Caco-2 (cell line): ENCODE measurements at regions of chr4 and their contacts with region 1.

Region 1: DNA sequence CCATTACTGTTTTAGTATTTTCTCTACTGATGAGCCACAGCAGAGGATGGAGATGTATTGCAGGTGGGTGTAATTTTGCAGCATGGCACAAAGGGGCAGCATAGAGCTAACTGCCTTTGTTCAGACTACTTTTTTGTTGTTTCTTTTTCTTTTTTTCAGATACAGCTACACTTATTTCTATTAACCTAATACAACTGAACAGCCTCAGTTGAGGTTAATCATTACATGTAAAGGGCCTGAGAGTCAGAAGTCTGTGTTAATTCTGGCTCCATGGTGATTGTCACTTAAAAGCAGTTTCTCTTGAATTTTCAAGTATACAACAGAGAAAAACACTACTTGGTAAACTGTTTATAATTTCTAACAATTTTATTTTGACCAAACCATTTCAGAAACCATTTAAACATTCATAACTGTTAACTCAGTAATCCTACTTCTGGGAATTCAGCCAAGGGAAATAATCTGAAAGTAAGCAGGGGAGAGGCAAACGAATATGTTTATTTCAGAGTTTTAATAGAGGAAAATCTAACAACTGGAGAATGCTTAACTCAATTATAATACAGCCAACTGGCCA is 13.9 kb upstream of the PPEF2 start:
- DNase-seq: peak in 1 of 2 experiments; percentile 48
- H3K4me3 ChIP-seq: no peak overlapping the region
- H3K4me3 Mint-ChIP-seq: no peak overlapping the region
- H3K27ac Mint-ChIP-seq: no peak overlapping the region
- H3K4me1 ChIP-seq: peaks cover 16% of the 10 kb centered on the region
- H3K4me1 Mint-ChIP-seq: no peaks in the 10 kb centered on the region
- H3K27me3 ChIP-seq: no peaks in the 10 kb centered on the region
- H3K27me3 Mint-ChIP-seq: no peaks in the 10 kb centered on the region
- CTCF ChIP-seq: peak; percentile 71 to 79

Region 2: DNA sequence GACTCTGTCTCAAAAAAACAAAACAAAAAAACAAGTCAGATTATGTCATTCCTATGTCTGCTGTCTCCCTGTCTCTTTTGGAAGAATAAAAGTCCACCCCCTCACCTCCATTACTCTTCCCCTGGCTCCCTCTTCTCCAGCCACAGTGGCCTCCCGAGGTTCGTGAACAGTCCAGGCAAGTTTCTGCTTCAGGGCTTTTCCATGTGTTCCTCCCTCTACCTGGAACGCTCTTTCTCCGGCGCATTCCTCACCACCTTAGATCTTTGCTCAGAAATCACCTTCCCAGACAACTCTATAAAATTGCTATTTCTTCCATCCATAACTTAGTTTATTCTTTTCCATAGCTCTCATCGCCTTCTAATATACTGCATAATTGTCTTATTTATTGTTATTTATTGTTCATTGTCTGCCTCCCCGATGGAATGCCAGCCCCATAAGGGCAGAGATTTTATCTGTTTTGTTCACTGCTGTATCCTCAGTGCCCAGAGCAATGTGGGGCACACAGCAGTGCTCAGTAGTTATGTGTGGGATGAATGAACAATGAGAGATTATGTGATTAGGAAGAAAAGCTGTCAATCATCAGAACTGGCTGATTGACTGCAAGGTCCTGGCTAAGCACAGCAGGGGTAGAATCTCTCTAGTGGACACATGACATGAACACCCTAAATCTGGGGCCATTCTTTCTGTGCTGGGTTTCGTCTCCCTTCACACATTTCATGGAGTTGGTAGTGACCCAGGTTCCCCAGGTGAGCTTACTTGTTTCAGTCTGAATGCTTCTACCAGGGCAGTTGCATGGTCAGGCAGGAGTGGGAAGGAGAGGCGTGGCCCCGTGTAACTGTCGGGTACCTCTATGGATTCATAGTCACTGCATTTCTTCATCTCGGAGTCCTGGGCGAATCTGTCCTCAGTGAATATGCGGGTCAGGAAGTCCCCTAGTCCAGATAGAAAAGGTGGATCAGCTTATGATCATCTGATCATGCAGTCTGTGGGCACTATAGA is 26.7 kb before region 1 on chr4:
- CTCF ChIA-PET with region 1: no interaction called
- POLR2A ChIA-PET with region 1: no interaction called
- intact Hi-C with region 1: no loop called
- DNase-seq: no peak
- H3K4me3 ChIP-seq: no peak overlapping the region
- H3K4me3 Mint-ChIP-seq: no peak overlapping the region
- H3K27ac Mint-ChIP-seq: no peak overlapping the region
- H3K4me1 ChIP-seq: no peaks in the 10 kb centered on the region
- H3K4me1 Mint-ChIP-seq: no peaks in the 10 kb centered on the region
- H3K27me3 ChIP-seq: no peaks in the 10 kb centered on the region
- H3K27me3 Mint-ChIP-seq: peaks cover 4% of the 10 kb centered on the region
- CTCF ChIP-seq: no peak

Region 3: DNA sequence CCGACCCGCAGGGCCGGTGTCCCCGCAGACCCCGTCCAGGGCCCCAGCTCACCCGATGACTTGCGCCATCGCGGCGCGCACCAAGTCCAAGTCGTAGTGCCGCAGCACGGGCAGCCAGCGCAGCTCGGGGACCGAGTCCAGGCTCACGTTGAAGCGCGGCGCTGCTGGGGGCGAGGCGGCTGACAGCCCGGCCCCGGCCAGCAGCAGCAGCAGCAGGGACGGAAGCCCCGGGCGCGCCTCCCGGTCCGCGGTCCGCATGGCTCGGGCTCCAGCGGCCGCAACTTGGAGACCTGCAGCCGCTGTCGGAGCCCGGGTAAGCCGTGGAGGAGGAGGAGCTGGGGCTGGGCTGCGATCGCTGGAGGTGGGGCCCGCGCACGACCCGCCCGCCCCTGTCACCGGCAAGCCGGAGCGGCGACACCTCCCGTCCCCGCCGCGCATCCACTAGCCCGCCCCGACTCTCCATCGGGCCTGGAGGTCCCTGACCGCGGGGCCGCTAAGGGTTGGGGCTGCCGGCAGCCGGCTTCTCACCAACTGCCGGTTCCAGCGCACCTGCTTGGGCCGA is 24.6 kb after region 1 on chr4 and contains the start of gene NAAA:
- CTCF ChIA-PET with region 1: interaction called, 24 read pairs
- POLR2A ChIA-PET with region 1: no interaction called
- intact Hi-C with region 1: loop called (anchors 1 kb)
- DNase-seq: peak; percentile 72 to 84
- H3K4me3 ChIP-seq: peak within 1 kb of the TSS; percentile 45
- H3K4me3 Mint-ChIP-seq: peak within 1 kb of the TSS; percentile 94
- H3K27ac Mint-ChIP-seq: peak within 1 kb of the TSS; percentile 77
- H3K4me1 ChIP-seq: 0 out of 2 replicates have a peak, but pooled peaks cover 3% of the 10 kb centered on the region
- H3K4me1 Mint-ChIP-seq: no peaks in the 10 kb centered on the region
- H3K27me3 ChIP-seq: no peaks in the 10 kb centered on the region
- H3K27me3 Mint-ChIP-seq: no peaks in the 10 kb centered on the region
- CTCF ChIP-seq: peak in 1 of 2 experiments; percentile 6
- total RNA-seq, gene NAAA: 11.2 and 11.8 TPM in 2 replicates

Region 4: GRCh38 chr4:75989846-75990528 is 73.8 kb after region 1 on chr4:
- CTCF ChIA-PET with region 1: no interaction called
- POLR2A ChIA-PET with region 1: no interaction called
- intact Hi-C with region 1: loop called (anchors 2 kb)
- DNase-seq: no peak
- H3K4me3 ChIP-seq: peak overlapping the region; percentile 76
- H3K4me3 Mint-ChIP-seq: peak overlapping the region; percentile 76
- H3K27ac Mint-ChIP-seq: peak overlapping the region; percentile 81
- H3K4me1 ChIP-seq: no peaks in the 10 kb centered on the region
- H3K4me1 Mint-ChIP-seq: peaks cover 18% of the 10 kb centered on the region
- H3K27me3 ChIP-seq: no peaks in the 10 kb centered on the region
- H3K27me3 Mint-ChIP-seq: no peaks in the 10 kb centered on the region
- CTCF ChIP-seq: no peak

Region 5: DNA sequence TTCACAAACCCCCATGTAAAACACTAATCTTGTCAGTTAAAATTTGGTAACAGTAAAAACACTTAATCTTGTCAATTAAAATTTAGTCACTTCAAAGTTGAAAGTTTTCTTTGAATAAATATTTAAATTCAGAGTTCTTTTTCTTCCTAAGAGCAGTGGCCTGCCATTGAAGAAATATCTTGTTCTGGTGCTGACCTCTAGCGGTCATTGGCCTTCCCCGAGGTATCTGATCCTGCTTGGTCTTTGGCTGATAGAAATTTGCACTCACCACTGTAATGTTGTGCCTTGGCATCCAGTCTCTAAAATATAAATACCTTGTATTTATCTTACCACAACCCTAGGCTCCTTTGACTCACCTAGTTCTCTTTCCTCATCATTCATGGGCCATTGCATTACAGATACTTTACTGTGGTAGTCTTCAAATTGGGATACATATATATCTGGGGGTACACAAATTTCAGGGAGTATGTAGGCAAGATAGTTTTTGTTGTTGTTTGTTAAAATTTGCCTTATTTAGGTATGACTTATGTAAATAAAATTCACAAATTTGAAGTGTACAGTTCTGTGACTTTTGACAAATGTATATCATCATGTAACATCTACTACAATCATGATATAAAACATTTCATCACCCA is 151.6 kb after region 1 on chr4:
- CTCF ChIA-PET with region 1: no interaction called
- POLR2A ChIA-PET with region 1: no interaction called
- intact Hi-C with region 1: loop called (anchors 1 kb)
- DNase-seq: peak; percentile 64 to 76
- H3K4me3 ChIP-seq: no peak overlapping the region
- H3K4me3 Mint-ChIP-seq: no peak overlapping the region
- H3K27ac Mint-ChIP-seq: no peak overlapping the region
- H3K4me1 ChIP-seq: no peaks in the 10 kb centered on the region
- H3K4me1 Mint-ChIP-seq: no peaks in the 10 kb centered on the region
- H3K27me3 ChIP-seq: no peaks in the 10 kb centered on the region
- H3K27me3 Mint-ChIP-seq: no peaks in the 10 kb centered on the region
- CTCF ChIP-seq: peak; percentile 69 to 72

Region 6: DNA sequence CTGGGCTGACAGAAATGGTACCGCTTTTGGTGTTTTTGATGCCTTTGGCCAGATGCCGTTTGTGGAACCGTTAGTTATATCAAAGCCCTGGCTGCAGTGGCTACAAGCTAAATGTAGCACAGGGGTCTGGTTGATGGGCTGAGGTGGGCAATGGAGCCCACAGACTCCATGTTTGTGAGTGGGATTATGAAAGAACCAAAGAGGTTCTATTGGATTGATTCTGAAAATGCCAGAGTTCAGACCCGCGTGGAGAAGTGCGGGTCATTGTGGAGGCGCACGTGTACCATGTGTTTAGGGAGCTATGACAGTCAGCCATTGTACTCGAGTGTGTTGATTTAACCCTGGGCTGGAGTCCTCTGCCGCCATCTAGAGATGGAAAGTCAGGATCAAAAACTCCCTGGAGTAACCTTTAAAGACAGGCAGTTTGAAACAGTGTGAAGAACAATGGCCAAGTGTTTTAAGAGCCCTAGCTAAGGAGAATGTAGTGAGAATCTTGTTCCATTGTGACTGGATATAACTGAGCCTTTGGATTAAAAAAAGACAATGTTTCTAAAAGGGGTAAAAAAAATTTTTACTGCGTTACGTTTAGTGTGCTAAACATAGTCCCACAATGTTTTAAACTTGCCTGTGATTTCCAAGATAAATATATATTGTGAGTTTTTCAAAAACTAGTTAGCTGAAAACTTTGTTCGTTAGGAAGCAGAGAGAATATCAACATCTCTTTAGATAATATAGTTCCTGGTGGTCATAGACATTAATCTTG is 171.0 kb after region 1 on chr4:
- CTCF ChIA-PET with region 1: interaction called, 13 read pairs
- POLR2A ChIA-PET with region 1: no interaction called
- intact Hi-C with region 1: no loop called
- DNase-seq: peak; percentile 67 to 71
- H3K4me3 ChIP-seq: peak overlapping the region; percentile 8; the same call in 1 of the 2 replicates
- H3K4me3 Mint-ChIP-seq: peak overlapping the region; percentile 69
- H3K27ac Mint-ChIP-seq: no peak overlapping the region
- H3K4me1 ChIP-seq: no peaks in the 10 kb centered on the region
- H3K4me1 Mint-ChIP-seq: peaks cover 5% of the 10 kb centered on the region
- H3K27me3 ChIP-seq: no peaks in the 10 kb centered on the region
- H3K27me3 Mint-ChIP-seq: no peaks in the 10 kb centered on the region
- CTCF ChIP-seq: peak; percentile 40 to 76